Activated T-helper 1 cell treated with anti-CD3 and anti-CD28 coated beads, Interleukin-12 subunit alpha, Interleukin-12 subunit beta, Interleukin-2, Interleukin-4 antibody, amounts not matched to agents 30 ng/mL and 10 ng/mL and 1 ng/mL, durations not matched to agents 14 hours and 24 hours and 36 hours (primary cell): ENCODE measurements at regions of chr3 and their contacts with region 1.

Region 1: GRCh38 chr3:157136647-157137387 is 23.1 kb downstream of the CCNL1 start:
- DNase-seq: no peak
- H3K4me3 Mint-ChIP-seq: no peak overlapping the region
- H3K27ac Mint-ChIP-seq: peak overlapping the region; percentile 35
- H3K4me1 Mint-ChIP-seq: peaks cover 57% of the 10 kb centered on the region
- H3K27me3 Mint-ChIP-seq: no peaks in the 10 kb centered on the region

Region 2: DNA sequence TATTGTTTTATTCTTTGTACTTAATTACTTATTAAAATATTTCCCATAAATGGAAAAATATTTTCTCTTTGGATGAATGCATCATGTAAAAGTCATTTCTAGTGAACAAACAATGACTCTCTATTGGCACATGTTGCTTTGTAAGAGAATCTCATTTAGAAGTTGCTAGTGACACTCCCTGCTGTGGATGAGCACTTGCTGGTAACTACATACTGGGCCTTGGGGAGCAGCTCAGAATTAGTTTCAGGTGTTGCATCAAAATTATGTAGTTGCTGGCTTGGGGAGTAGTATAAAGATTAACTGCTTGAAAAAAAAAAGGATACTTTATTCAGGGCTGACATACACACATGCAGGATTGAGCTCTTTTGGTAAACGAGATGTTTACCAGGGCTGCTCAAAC is 1096.8 kb before region 1 on chr3:
- intact Hi-C with region 1: loop called (anchors 5 kb)
- DNase-seq: no peak
- H3K4me3 Mint-ChIP-seq: no peak overlapping the region
- H3K27ac Mint-ChIP-seq: no peak overlapping the region
- H3K4me1 Mint-ChIP-seq: no peaks in the 10 kb centered on the region
- H3K27me3 Mint-ChIP-seq: peaks cover 6% of the 10 kb centered on the region

Region 3: DNA sequence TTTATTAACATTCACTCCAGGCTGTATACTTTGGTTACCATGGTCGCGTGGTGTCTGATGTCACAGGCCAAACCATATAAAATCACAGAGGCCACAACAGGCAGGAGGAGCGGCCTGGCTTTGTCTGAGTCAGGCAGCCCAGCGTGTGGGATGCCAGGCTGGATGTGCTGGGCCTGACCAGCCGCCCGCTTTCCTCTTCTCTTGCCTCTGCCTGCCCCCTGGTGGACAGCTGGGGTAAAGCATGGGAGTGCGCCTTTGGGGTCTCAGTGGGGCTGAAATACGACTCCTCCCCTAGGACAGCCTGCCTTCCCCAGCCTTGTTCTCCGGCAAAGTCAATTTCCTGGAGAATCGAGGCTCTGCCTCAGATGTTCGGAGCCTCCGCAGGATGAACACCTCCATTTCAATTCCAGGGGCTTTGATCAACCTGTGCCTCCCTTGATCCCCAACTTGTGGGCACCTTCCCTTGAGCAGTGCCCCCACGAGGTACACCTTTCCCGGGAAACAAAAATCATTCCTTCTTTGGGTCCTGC is 55.1 kb before region 1 on chr3:
- intact Hi-C with region 1: loop called (anchors 1 kb)
- DNase-seq: peak; percentile 73
- H3K4me3 Mint-ChIP-seq: no peak overlapping the region
- H3K27ac Mint-ChIP-seq: no peak overlapping the region
- H3K4me1 Mint-ChIP-seq: peaks cover 46% of the 10 kb centered on the region
- H3K27me3 Mint-ChIP-seq: no peaks in the 10 kb centered on the region

Region 4: DNA sequence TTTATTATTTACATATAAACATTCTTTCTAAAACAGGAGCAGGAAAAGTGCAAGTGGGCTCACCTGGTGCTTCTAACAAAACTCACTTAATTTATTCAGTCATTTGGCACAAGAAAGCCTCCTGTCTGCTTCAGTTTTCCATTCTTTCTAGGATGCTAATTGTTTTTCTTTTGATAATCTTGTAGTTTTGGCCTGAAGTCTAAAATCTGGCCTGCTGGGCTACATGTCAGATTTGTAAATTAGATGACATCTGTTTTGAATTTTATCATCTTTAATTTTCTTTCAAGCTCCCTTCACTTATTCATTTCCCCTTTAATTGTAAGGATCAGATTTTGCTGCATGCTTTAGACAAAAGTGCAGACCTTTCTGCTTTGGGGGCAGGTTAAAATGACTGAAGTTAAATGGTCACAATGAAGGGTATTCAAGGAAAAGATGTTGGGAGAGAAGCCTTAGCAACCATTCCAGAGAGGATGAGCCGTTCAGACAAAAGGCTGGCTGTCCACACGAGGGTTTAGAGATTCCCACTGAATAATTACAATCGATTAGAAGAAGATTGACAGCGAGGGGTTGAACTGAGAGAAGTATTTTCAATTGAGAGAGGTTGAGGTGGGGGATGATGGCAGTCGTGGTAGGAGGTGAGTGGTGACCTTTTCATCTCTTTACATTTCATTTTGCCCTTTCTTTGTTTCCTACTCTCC is 239.9 kb after region 1 on chr3:
- intact Hi-C with region 1: no loop called
- DNase-seq: no peak
- H3K4me3 Mint-ChIP-seq: no peak overlapping the region
- H3K27ac Mint-ChIP-seq: no peak overlapping the region
- H3K4me1 Mint-ChIP-seq: no peaks in the 10 kb centered on the region
- H3K27me3 Mint-ChIP-seq: no peaks in the 10 kb centered on the region